ENCODE measurements at regions of chr6 and their contacts with region 1.

Region 1: DNA sequence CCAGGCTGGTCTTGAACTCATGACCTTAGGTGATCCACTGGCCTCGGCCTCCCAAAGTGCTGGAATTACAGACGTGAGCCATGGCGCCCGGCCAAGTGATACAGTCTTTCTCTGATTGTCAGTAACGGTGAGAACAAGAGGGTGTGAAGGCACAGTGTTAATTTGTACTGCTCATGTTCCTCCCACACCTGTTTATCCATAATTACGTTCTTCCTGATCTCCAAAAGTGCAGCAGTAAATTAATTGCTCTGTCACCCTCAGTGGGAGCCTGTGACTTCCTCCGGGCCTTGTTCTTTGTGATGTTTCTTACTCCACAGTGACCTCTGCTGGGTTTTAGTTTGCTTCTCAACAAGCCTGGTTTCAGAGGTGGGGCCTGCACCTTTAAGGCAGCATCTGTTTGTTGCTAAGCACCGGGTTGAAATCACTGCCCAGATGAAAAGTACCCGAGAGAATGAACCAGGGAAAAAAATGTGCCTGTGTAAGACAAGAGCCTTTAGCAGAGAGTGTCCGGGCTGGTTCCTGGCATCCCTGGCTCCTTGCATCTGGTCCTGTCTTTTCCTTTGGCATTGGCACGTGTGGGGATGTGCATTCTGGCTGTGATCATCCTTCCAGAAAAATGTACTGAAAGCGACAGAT is 89.1 kb upstream of the CLDN20 start:
- DNase-seq: peak in 4 of 6 donors; percentile 32 to 60 (median 52)
- ATAC-seq: peak; percentile 88 to 96 (median 94)
- H3K4me3 ChIP-seq: no peak overlapping the region
- H3K27ac ChIP-seq: no peak overlapping the region
- H3K4me1 ChIP-seq: peaks cover 0 to 5% (median 4%) of the 10 kb centered on the region in 3 donors
- H3K27me3 ChIP-seq: no peaks in the 10 kb centered on the region
- CTCF ChIP-seq: peak in 3 of 4 donors; percentile 12 to 31 (median 27)

Region 2: DNA sequence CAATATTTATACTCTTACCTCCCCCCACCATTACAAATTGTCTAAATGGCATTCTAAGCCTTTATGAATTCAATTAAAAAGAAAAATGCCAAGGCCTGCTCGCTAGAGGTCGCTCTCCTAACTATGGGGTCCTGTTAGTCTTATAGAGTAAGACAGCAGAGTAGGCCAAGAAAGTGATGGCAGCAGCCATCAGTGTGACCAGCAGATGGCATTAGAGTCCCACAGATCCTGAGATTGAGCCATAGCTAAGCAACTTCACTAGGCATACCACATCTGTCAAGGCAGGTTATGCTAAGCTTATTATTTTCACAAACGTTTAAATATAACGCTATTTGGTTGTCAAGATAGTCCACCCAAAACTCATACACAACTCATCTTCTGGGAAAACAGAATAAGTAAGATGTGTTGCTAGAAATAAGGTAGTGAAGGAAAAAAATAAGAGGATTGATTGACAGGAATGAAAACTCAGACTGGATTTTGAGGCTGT is 499.0 kb before region 1 on chr6:
- intact Hi-C with region 1: loop called in 1 of 3 experiments (anchors 10 kb)
- DNase-seq: peak; percentile 81 to 94 (median 84)
- ATAC-seq: peak; percentile 98 to 100 (median 100)
- H3K4me3 ChIP-seq: no peak overlapping the region
- H3K27ac ChIP-seq: no peak overlapping the region
- H3K4me1 ChIP-seq: no peaks in the 10 kb centered on the region
- H3K27me3 ChIP-seq: no peaks in the 10 kb centered on the region
- CTCF ChIP-seq: peak; percentile 94 to 99 (median 97)

Region 3: GRCh38 chr6:154830771-154831170 is 343.9 kb before region 1 on chr6:
- intact Hi-C with region 1: no loop called
- DNase-seq: no peak
- ATAC-seq: no peak
- H3K4me3 ChIP-seq: no peak overlapping the region
- H3K27ac ChIP-seq: no peak overlapping the region
- H3K4me1 ChIP-seq: peaks cover 6 to 15% (median 11%) of the 10 kb centered on the region in 3 donors
- H3K27me3 ChIP-seq: no peaks in the 10 kb centered on the region
- CTCF ChIP-seq: no peak

Region 4: GRCh38 chr6:154928325-154928922 is 246.3 kb before region 1 on chr6:
- intact Hi-C with region 1: loop called in 1 of 3 experiments (anchors 5 kb)
- DNase-seq: peak in 3 of 6 donors; percentile 24 to 57 (median 33)
- ATAC-seq: peak; percentile 64 to 91 (median 88)
- H3K4me3 ChIP-seq: no peak overlapping the region
- H3K27ac ChIP-seq: no peak overlapping the region
- H3K4me1 ChIP-seq: no peaks in the 10 kb centered on the region
- H3K27me3 ChIP-seq: no peaks in the 10 kb centered on the region
- CTCF ChIP-seq: peak; percentile 39 to 65 (median 56)